BJ (cell line): ENCODE measurements at regions of chr4 and their contacts with region 1.

Region 1: DNA sequence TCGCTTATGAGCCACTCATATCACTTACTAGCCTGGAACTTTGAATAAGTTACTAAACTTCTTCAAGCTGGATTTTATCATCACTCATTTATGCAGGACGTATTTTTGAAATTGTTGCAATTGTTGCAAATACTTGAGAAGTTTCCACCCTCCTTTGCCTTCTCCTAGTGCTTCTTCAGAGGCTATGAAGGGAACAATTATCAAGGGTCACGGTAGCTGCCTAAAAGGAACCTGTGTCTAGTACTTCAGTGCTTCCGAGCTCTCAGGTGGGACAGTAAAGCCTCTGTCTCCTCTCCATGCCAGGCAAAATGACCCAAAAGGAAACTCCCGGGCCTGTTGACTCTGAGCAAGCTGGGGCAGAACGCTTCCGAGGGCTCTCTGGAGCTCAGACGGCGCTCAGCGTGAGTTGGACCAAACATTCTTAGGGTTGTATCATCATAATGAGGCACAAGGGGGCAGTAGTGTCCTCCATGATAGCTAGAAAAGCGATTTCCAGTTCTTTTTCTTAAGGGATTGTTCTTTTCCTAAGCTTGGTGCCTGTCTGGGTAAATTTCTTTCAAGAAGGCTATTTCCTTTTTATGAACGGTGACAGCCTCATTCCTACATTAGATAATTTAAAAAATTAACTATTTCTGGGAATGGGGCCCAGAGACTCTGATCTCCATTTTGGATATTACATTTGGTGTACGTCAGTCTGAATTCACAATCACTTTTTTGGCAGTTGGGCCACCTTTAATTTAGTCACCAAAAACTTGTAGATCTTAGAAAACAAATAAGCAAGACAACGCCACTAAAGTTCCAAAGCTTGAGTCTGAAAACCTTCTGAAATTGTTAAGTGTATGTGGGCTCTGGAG is 73.1 kb downstream of the PACRGL start:
- DNase-seq: peak; percentile 1
- H3K4me3 ChIP-seq: no peak overlapping the region
- H3K27me3 ChIP-seq: no peaks in the 10 kb centered on the region; the same call in 1 of the 2 replicates
- CTCF ChIP-seq: peak; percentile 80

Region 2: GRCh38 chr4:20760053-20760452 is 13.3 kb before region 1 on chr4:
- CTCF ChIA-PET with region 1: interaction called, 17 read pairs
- POLR2A ChIA-PET with region 1: no interaction called
- DNase-seq: no peak
- H3K4me3 ChIP-seq: no peak overlapping the region
- H3K27me3 ChIP-seq: no peaks in the 10 kb centered on the region
- CTCF ChIP-seq: peak; percentile 31; the same call in 1 of the 2 replicates

Region 3: GRCh38 chr4:20787940-20788665 is 14.7 kb after region 1 on chr4:
- CTCF ChIA-PET with region 1: interaction called, 10 read pairs
- POLR2A ChIA-PET with region 1: no interaction called
- DNase-seq: no peak
- H3K4me3 ChIP-seq: no peak overlapping the region
- H3K27me3 ChIP-seq: no peaks in the 10 kb centered on the region; the same call in 1 of the 2 replicates
- CTCF ChIP-seq: no peak

Region 4: DNA sequence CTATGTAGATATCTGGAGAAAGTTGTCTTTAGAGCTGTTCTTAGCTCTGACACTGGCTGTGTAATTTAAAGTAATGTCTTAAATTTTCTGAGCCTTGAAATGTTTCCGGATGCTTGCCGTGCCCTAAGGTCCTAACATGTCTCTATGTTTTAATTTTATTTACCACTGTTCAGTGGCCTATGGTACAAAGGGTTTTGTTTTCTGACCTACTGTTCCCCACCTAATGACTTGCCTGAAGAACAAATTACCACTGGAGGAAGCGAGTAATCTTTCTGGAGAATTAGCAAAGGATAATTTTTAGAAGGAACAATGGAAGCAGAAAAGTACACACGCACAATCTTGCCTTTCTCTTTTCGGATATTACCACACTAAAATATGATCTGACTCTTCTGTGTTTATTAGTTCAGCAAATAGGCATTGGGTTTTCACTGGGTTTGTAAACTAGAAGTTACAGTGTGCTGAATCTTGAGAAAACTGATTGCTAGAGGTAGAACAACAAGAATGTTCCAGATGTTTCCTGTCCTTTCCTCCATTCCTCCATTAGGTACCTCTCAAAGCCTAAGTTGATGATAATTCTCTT is 362.8 kb after region 1 on chr4:
- CTCF ChIA-PET with region 1: interaction called, 10 read pairs
- POLR2A ChIA-PET with region 1: no interaction called
- DNase-seq: no peak
- H3K4me3 ChIP-seq: no peak overlapping the region
- H3K27me3 ChIP-seq: no peaks in the 10 kb centered on the region
- CTCF ChIP-seq: no peak

Region 5: GRCh38 chr4:21469438-21470300 is 696.3 kb after region 1 on chr4:
- CTCF ChIA-PET with region 1: interaction called, 35 read pairs
- POLR2A ChIA-PET with region 1: no interaction called
- DNase-seq: no peak
- H3K4me3 ChIP-seq: no peak overlapping the region
- H3K27me3 ChIP-seq: no peaks in the 10 kb centered on the region
- CTCF ChIP-seq: peak; percentile 58